Activated naive CD4-positive, alpha-beta T cell treated with anti-CD3 and anti-CD28 coated beads for 36 hours (primary cell): ENCODE measurements at regions of chr1 and their contacts with region 1.

Region 1: GRCh38 chr1:47437447-47438164 is at the start of gene FOXD2:
- DNase-seq: peak; percentile 90
- H3K4me3 Mint-ChIP-seq: peak within 1 kb of the TSS; percentile 92
- H3K27ac Mint-ChIP-seq: peak within 1 kb of the TSS; percentile 53
- H3K4me1 Mint-ChIP-seq: peaks cover 24% of the 10 kb centered on the region
- H3K27me3 Mint-ChIP-seq: peaks cover 37% of the 10 kb centered on the region
- total RNA-seq, gene FOXD2: 0.12 to 0.19 TPM

Region 2: GRCh38 chr1:47231301-47232186 is 206.1 kb before region 1 on chr1:
- CTCF ChIA-PET with region 1: no interaction called
- intact Hi-C with region 1: loop called (anchors 5 kb)
- DNase-seq: peak; percentile 41
- H3K4me3 Mint-ChIP-seq: peak overlapping the region; percentile 73
- H3K27ac Mint-ChIP-seq: no peak overlapping the region
- H3K4me1 Mint-ChIP-seq: peaks cover 22% of the 10 kb centered on the region
- H3K27me3 Mint-ChIP-seq: peaks cover 80% of the 10 kb centered on the region

Region 3: DNA sequence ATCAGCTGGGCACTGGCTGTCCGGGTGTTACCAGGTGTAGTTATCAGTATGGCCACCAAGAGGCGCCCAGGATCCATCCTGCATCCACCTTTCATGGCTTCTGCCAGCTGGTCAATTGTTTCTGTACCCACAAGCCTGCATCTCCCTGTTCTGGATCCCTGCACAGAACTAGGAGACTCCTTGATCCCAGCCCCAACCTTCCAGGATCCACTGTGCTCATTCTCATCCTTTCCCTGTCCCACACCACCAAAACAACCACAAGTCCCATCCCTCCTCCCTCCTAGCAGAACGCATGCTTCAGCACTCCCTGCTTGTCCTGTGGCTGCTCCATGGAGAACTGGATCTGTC is 48.7 kb before region 1 on chr1:
- CTCF ChIA-PET with region 1: interaction called, 9 read pairs
- intact Hi-C with region 1: loop called (anchors 5 kb)
- DNase-seq: peak; percentile 70
- H3K4me3 Mint-ChIP-seq: no peak overlapping the region
- H3K27ac Mint-ChIP-seq: no peak overlapping the region
- H3K4me1 Mint-ChIP-seq: no peaks in the 10 kb centered on the region
- H3K27me3 Mint-ChIP-seq: peaks cover 7% of the 10 kb centered on the region

Region 4: DNA sequence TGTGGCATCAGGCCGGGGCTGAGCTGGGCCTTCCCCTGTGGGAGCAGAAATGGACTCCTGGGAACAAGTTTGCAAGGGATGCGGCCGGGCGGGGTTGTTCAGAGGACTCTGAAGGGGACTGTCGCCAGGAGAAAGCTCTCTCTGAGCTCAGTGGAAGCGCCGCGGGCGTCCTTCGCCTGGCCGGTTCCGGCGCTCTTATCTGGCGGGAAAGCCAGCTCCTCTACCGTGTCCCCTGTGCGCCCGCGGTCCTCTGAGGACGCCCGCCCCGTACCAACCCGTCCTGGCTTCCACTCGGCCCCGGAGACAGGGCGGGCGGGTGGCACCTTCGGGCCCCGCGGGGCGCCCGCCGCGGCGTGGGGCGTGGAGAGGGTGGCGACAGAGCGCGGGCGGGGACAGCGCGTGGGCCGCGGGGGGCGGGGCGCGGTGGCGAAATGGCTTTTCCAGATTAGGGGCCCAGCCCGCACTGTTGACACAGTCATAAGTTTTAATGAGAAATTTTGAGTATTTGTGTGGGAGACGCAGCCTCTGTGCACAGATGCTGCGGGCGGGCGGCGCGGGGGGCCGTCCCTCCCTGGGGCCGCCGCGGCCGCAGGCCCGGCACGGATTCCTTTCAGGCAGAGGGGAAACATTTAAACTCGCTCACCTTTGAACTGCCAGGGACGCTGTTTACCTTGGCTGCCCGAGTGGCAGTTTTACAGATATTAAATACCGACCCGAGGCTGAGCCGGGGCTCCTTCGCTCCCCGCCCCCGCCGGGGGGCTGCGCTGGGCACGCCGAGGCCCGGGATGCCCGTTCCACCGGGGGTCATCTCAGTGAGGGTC is 70.5 kb after region 1 on chr1:
- CTCF ChIA-PET with region 1: interaction called, 7 read pairs
- intact Hi-C with region 1: loop called (anchors 2 kb)
- DNase-seq: peak; percentile 31
- H3K4me3 Mint-ChIP-seq: peak overlapping the region; percentile 8
- H3K27ac Mint-ChIP-seq: no peak overlapping the region
- H3K4me1 Mint-ChIP-seq: peaks cover 3% of the 10 kb centered on the region
- H3K27me3 Mint-ChIP-seq: peaks cover 70% of the 10 kb centered on the region

Region 5: GRCh38 chr1:47624531-47624930 is 186.9 kb after region 1 on chr1:
- CTCF ChIA-PET with region 1: interaction called, 3 read pairs
- intact Hi-C with region 1: loop called (anchors 2 kb)
- DNase-seq: no peak
- H3K4me3 Mint-ChIP-seq: no peak overlapping the region
- H3K27ac Mint-ChIP-seq: no peak overlapping the region
- H3K4me1 Mint-ChIP-seq: no peaks in the 10 kb centered on the region
- H3K27me3 Mint-ChIP-seq: no peaks in the 10 kb centered on the region